Right ventricle myocardium inferior (tissue), 1 donor: ENCODE measurements at regions of chr9 and their contacts with region 1.

Region 1: GRCh38 chr9:124537926-124538325 is 30.7 kb upstream of the NR5A1 start:
- DNase-seq: no peak
- ATAC-seq: no peak

Region 2: DNA sequence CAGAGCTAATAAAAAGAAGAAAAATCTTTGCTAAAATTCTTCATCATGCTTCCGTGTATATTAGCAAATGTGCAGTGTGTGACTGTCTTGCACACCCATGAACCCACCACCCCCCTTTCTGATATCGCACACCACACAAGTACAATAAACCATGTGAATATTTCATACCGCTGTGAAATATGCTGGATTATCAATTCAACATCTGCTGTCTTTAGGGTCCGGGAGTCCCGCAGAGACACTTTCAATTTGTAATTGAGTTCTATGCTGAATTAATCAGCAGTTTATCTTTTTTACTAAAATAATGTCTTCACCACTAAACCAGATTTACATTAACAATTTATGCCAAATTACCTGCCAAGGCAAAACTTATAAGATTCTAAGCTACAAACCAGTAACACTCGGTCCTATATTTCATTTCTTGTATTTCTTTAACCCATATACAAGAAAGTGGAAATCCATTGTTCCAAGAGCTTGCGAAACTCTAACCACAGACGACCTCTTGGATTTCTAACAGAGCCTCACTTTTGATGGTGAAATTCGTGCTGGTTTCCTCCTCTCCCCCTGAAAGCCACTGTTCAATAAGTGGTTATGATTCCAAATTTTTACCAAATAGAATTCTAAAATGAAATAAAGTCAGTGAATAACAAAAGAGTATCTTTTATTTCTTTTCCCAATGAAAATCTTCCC is 166.9 kb before region 1 on chr9:
- intact Hi-C with region 1: no loop called
- DNase-seq: no peak
- ATAC-seq: no peak

Region 3: DNA sequence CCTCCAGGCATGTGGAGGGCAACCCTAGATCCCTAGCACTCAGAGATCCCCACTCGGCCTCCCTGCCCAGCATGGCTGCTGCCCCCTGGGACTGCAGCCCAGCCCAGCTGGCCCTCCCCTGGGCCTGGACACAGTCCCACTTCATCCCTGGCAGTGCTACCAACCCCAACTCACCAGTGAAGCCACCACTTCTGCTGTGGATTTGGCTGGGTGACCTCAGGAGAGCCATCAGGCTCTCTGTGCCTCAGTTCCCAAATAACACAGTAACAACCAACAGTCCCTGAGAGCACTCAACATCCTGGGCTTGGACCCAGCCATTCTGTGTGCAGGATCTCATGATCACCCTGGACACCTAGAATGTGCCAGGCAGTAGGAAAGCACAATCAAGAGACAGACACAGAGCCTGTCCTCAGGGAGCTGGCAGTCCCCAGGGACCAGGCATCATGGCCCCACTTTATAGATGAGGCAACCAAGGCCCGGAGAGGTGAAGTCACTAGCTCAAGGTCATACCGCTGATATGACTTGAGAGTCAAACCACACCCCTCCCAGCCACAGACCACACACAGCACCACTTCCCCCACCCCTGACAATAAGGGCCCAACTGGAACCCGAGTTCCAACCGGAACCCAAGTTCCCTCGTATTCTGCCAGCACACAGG is 118.0 kb before region 1 on chr9:
- intact Hi-C with region 1: loop called (anchors 1 kb)
- DNase-seq: no peak
- ATAC-seq: no peak

Region 4: DNA sequence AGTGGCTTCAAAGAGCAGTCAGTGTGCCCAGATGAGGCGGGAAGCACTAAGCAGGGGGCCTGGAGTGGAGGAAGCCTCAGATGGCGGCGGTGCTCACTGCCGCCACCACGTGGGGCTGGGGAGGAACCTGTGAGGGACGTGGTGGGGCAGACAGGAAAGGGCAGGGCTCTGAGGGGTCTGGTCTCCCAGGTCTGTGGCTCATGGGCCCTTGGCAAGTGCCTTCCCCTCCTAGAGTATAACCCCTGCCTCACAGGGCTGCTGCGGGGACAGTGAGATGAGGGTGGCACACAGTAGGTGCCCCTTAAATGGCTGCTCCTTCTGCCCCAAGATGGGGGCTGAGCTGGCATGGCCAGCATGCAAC is 57.3 kb before region 1 on chr9:
- intact Hi-C with region 1: no loop called
- DNase-seq: no peak
- ATAC-seq: no peak